IMR-90 (cell line): ENCODE measurements at regions of chr19 and their contacts with region 1.

Region 1: GRCh38 chr19:32767951-32768679 is 48.5 kb downstream of the TDRD12 start:
- DNase-seq: no peak
- ATAC-seq: no peak
- H3K4me3 ChIP-seq: no peak overlapping the region
- H3K27ac ChIP-seq: no peak overlapping the region
- H3K4me1 ChIP-seq: no peaks in the 10 kb centered on the region
- H3K27me3 ChIP-seq: peaks cover 3% of the 10 kb centered on the region
- CTCF ChIP-seq: no peak
- POLR2A ChIP-seq: no peak
- RAD21 ChIP-seq: no peak

Region 2: GRCh38 chr19:33000510-33000909 is 232.4 kb after region 1 on chr19:
- CTCF ChIA-PET with region 1: no interaction called
- POLR2A ChIA-PET with region 1: no interaction called
- dilution Hi-C with region 1: no loop called
- in situ Hi-C with region 1: no loop called
- intact Hi-C with region 1: no loop called
- DNase-seq: no peak
- ATAC-seq: no peak
- H3K4me3 ChIP-seq: no peak overlapping the region
- H3K27ac ChIP-seq: no peak overlapping the region
- H3K4me1 ChIP-seq: no peaks in the 10 kb centered on the region
- H3K27me3 ChIP-seq: no peaks in the 10 kb centered on the region
- CTCF ChIP-seq: no peak
- POLR2A ChIP-seq: no peak
- RAD21 ChIP-seq: no peak

Region 3: GRCh38 chr19:34475026-34475974 is 1707.2 kb after region 1 on chr19:
- CTCF ChIA-PET with region 1: no interaction called
- POLR2A ChIA-PET with region 1: interaction called, 10 read pairs
- dilution Hi-C with region 1: no loop called
- in situ Hi-C with region 1: no loop called
- intact Hi-C with region 1: no loop called
- DNase-seq: peak; percentile 91
- ATAC-seq: peak; percentile 89
- H3K4me3 ChIP-seq: no peak overlapping the region
- H3K27ac ChIP-seq: peak overlapping the region; percentile 71
- H3K4me1 ChIP-seq: peaks cover 6% of the 10 kb centered on the region
- H3K27me3 ChIP-seq: no peaks in the 10 kb centered on the region
- CTCF ChIP-seq: no peak
- POLR2A ChIP-seq: no peak
- RAD21 ChIP-seq: no peak